ENCODE measurements at regions of chr6 and their contacts with region 1.

Region 1: DNA sequence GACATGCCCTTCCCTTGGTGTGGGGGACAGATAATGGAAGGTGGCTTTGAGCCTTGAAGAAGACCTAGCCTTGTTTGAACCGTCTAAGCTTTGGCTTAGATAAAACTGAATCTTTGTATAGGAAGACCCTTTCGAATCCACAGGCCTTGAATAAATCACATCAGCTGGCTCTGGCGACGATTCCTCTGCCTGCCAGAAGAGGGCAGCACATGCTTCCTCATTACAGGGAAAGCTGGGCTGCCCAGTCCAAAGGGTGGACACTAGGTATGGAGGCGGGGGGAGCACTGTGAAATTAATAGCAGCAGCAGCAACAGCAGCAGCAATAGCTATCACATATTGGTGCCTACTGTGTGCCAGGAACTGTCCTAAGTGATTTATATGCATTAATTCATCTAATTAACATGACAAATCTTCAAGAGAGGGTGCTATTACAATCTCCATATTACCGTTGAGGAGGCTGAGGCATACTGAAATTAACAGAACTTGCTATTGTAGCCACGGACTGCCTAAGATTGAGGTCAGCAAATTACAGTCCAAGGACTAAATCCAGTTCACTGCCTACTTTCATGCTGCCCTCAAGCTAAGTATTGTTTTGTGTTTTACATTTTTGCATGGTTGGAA is 85.1 kb downstream of the CLIC5 start:
- DNase-seq: peak; percentile 31
- H3K4me3 Mint-ChIP-seq: no peak overlapping the region
- H3K27ac Mint-ChIP-seq: no peak overlapping the region
- H3K4me1 Mint-ChIP-seq: peaks cover 10% of the 10 kb centered on the region
- H3K27me3 Mint-ChIP-seq: peaks cover 2% of the 10 kb centered on the region

Region 2: GRCh38 chr6:45892696-45893245 is 37.8 kb before region 1 on chr6:
- intact Hi-C with region 1: no loop called
- DNase-seq: no peak
- H3K4me3 Mint-ChIP-seq: no peak overlapping the region
- H3K27ac Mint-ChIP-seq: no peak overlapping the region
- H3K4me1 Mint-ChIP-seq: peaks cover 24% of the 10 kb centered on the region
- H3K27me3 Mint-ChIP-seq: peaks cover 4% of the 10 kb centered on the region

Region 3: DNA sequence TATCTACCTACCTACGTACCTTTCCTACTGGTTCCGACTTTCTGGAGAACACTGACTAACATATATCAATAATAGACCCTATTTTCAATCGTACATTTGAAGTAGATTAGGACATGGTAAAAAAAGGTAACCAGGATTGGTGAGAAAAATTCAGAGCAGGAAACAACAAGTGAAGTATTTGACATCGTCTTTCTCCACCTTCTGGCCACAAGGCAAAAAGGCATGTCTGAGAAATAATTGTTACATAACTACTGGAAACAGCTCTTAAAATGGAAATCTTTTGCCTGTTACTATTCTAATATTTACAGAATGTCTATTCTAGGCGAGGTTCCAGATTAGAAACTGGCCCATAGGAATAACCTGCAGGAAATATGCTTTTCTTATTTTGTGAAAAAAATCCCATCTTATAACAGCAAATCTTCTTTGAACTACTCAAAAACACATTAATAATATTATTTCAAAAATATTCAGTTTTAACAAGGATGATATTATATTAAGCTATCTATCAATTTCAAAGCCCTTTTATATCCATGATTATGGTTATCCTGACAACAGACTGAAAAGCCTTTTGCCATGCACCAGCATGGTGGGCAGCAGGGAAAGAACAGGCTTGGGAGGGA is 479.9 kb after region 1 on chr6:
- intact Hi-C with region 1: loop called (anchors 1 kb)
- DNase-seq: no peak
- H3K4me3 Mint-ChIP-seq: no peak overlapping the region
- H3K27ac Mint-ChIP-seq: no peak overlapping the region
- H3K4me1 Mint-ChIP-seq: no peaks in the 10 kb centered on the region
- H3K27me3 Mint-ChIP-seq: peaks cover 6% of the 10 kb centered on the region

Region 4: GRCh38 chr6:46626228-46626909 is 695.8 kb after region 1 on chr6:
- intact Hi-C with region 1: loop called (anchors 5 kb)
- DNase-seq: no peak
- H3K4me3 Mint-ChIP-seq: no peak overlapping the region
- H3K27ac Mint-ChIP-seq: no peak overlapping the region
- H3K4me1 Mint-ChIP-seq: no peaks in the 10 kb centered on the region
- H3K27me3 Mint-ChIP-seq: peaks cover 9% of the 10 kb centered on the region